Aorta (tissue), 5 donors: ENCODE measurements at regions of chr13 and their contacts with region 1.

Region 1: GRCh38 chr13:98842864-98843481 is 90.5 kb upstream of the SLC15A1 start:
- DNase-seq: peak; percentile 80 to 85
- ATAC-seq: peak; percentile 84
- H3K4me3 ChIP-seq: no peak overlapping the region
- H3K27ac ChIP-seq: no peak overlapping the region
- H3K4me1 ChIP-seq: no peaks in the 10 kb centered on the region
- H3K27me3 ChIP-seq: no peaks in the 10 kb centered on the region

Region 2: DNA sequence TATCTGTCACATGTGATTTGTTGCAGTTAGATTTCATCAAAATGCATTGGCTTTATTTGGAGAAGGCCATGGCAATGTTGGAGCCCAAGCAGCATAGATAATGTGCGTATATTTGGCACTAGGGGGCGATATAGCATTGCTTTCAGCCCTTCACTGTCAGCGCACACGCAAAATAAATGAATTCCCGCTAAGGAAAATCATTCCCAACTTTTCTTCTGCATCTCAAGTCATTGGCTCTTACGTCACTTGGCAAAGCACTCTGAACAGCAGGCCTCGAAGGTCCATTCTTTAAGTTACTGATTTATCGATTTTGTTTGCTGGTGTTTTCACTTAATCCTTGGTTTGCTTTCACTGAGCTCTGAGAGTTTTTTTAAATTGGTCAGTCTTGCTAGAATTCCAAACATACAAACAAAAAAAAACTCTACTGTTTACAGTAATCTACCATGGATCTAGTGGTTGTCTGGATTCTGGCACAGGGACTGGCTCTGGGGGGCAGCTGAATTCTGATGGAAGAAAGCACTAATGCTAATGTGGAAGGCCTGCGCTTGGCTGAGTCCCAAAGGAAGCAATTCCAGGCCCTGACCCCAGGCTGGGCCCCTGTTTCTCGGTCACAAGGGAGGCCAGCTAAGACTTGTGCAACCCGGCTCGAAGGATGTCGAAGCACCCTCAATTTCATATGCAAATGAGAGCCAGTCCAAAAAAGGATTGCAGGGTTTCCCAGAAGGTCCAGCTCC is 987.2 kb before region 1 on chr13:
- intact Hi-C with region 1: loop called in 1 of 2 experiments (anchors 10 kb)
- DNase-seq: peak; percentile 55 to 77
- ATAC-seq: peak; percentile 86
- H3K4me3 ChIP-seq: no peak overlapping the region
- H3K27ac ChIP-seq: no peak overlapping the region
- H3K4me1 ChIP-seq: no peaks in the 10 kb centered on the region
- H3K27me3 ChIP-seq: no peaks in the 10 kb centered on the region

Region 3: DNA sequence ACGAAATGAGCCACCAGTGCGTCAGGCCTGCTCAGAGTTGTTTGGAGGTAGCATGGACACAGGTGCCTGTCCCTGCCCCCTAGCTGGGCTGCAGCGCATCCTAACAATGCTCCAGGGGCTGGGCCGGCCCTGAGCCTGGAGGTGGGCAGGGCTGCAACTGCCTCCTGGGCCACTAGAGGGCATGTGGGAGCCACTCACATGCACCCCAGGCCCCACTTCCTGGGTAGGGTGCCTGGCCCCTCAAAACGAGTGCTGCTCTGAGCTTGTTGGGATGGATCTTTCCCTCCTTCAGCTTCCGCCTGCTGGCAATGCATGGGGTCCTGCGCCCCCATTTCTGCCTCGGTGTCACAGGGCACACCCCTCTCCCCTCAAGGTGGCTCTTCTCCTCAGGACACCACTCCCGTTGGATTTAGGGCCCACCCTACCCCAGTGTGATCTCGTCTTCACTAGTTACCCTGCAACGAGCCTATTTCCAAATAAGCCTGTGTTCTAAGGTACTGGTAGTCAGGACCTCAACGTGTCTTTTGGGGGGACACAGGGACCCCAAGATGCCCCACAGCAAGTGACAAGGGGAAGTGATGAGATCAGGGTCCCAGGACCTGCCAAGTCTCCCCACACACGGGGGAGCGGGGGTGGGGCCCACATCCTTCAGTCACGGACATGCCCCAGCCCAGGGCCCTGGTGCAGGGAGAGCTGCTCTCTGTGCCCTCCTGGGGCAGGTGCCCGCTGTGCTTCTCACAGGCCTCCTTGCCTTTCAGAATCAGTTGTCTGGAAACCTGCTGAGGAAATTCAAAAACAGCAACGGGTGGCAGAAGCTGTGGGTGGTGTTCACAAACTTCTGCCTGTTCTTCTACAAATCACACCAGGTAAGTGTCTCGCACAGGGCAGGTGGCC is 397.4 kb before region 1 on chr13:
- intact Hi-C with region 1: loop called in 1 of 2 experiments (anchors 5 kb)
- DNase-seq: peak; percentile 76 to 91
- ATAC-seq: peak; percentile 87
- H3K4me3 ChIP-seq: no peak overlapping the region
- H3K27ac ChIP-seq: no peak overlapping the region
- H3K4me1 ChIP-seq: no peaks in the 10 kb centered on the region
- H3K27me3 ChIP-seq: no peaks in the 10 kb centered on the region

Region 4: GRCh38 chr13:98476538-98476966 is 366.4 kb before region 1 on chr13:
- intact Hi-C with region 1: loop called in 1 of 2 experiments (anchors 10 kb)
- DNase-seq: peak in 1 of 2 donors; percentile 72
- ATAC-seq: peak; percentile 60
- H3K4me3 ChIP-seq: no peak overlapping the region
- H3K27ac ChIP-seq: no peak overlapping the region
- H3K4me1 ChIP-seq: no peaks in the 10 kb centered on the region
- H3K27me3 ChIP-seq: no peaks in the 10 kb centered on the region

Region 5: DNA sequence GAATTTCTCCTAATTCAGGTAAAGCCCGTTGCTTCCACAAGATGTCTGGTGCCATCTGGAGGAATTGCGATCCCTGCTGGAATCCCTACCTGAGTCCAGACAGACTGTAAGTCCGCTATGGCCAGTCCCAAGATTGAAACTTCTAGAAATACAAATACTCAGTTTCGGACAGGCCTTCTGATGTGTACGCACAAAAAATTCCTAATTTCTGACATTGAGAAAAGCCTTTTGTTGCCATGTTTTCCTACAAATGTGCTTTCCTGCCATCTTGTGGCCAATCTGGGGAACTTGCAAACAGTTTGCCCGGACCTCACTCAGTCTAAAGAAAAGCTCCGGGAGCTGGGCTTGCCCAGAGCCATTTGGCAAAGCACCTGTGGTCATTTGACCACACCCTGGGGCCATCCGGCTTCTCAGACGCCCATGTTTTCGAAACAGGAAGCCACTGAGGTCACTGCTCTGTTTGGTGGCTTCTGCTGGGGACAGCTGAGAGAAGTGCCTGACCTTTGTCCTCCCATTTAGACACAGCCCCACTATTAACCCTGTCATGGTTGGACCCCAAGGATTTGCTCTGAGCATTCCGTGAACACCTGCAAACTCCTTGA is 169.9 kb before region 1 on chr13:
- intact Hi-C with region 1: loop called in 1 of 2 experiments (anchors 5 kb)
- DNase-seq: peak; percentile 72 to 81
- ATAC-seq: peak; percentile 80
- H3K4me3 ChIP-seq: no peak overlapping the region
- H3K27ac ChIP-seq: no peak overlapping the region
- H3K4me1 ChIP-seq: peaks cover 0 to 3% of the 10 kb centered on the region in 2 donors
- H3K27me3 ChIP-seq: no peaks in the 10 kb centered on the region

Region 6: DNA sequence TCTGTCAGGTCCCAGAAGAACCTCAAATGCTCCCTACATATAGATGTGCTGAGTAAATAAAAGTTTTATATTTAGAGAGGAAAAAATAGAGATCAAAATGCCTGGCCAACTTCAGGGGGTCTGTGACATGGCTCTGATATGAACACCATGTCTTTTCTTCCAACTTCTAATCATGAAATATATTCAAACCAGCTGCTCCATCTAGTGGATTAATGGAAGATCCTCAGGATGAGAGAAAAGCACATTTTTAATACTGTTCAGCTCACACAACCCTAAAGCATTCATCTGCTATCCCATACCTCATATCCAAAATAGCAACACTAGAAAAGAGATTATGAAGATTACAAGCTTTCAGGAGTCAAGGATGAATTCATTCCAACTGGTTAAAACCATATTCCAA is 190.8 kb after region 1 on chr13:
- intact Hi-C with region 1: loop called in 1 of 2 experiments (anchors 10 kb)
- DNase-seq: no peak
- ATAC-seq: no peak
- H3K4me3 ChIP-seq: no peak overlapping the region
- H3K27ac ChIP-seq: no peak overlapping the region
- H3K4me1 ChIP-seq: no peaks in the 10 kb centered on the region
- H3K27me3 ChIP-seq: no peaks in the 10 kb centered on the region